ENCODE measurements at regions of chr1 and their contacts with region 1.

Region 1: GRCh38 chr1:27300341-27301051 is 21.5 kb upstream of the TMEM222 start:
- DNase-seq: peak; percentile 90 to 96 (median 93)
- H3K4me3 ChIP-seq: no peak overlapping the region
- H3K27ac ChIP-seq: no peak overlapping the region
- H3K4me1 ChIP-seq: peaks cover 0 to 5% (median 0%) of the 10 kb centered on the region in 3 donors
- H3K27me3 ChIP-seq: no peaks in the 10 kb centered on the region
- CTCF ChIP-seq: peak; percentile 99

Region 2: DNA sequence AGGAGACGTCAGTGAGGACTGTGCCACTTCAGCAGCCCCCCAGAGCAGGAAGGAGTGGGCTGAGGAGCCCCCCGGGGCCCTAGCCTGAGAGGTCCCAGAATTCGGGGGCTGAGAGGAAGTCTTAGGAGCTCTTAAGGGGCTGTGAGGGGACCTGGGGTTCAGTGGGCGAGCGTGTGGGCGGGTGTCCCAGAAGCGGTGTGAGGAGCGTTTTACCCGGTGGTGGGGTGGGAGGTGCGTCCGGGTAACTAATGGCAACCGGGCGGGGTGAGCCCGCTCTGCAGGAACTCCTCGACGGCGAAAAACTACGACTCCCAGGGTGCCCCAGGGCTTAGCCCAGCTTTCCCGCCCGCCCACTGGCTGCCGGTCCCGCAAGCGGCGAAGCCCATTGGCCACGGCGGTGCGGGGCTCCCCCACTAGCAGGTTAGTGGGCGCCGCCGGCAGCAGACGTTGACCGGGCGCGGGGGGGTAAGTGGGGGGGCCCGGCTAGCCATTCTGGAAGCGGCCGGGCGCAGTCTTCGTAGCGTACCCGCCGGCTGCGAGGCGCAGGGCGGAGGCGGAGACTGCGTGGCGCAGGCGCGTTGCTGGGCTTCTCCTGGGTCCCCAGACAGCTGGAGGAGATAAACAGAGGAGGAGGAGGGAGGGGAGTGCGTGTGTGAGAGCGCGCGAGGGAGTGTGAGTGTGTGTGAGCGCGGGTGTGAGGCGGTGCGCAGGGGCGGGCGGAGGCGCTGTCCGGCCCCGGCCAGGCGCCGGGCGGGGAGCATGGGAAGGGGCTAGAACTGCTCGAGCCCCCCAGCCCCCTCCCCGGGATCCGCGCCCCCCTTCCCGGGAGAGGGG is 66.2 kb before region 1 on chr1 and contains the start of gene WDTC1:
- intact Hi-C with region 1: no loop called
- DNase-seq: peak; percentile 98 to 99 (median 99)
- H3K4me3 ChIP-seq: peak within 1 kb of the TSS; percentile 84 to 88 (median 87)
- H3K27ac ChIP-seq: peak within 1 kb of the TSS; percentile 32 to 47
- H3K4me1 ChIP-seq: peaks cover 0 to 15% (median 0%) of the 10 kb centered on the region in 3 donors
- H3K27me3 ChIP-seq: no peaks in the 10 kb centered on the region
- CTCF ChIP-seq: no peak
- total RNA-seq, gene WDTC1: 42.2 TPM

Region 3: GRCh38 chr1:27392096-27392777 is 91.7 kb after region 1 on chr1 and contains the start of gene GPR3:
- intact Hi-C with region 1: loop called (anchors 5 kb)
- DNase-seq: peak; percentile 90 to 95 (median 94)
- H3K4me3 ChIP-seq: peak within 1 kb of the TSS; percentile 26 to 57 (median 53)
- H3K27ac ChIP-seq: peak within 1 kb of the TSS; percentile 81 to 83
- H3K4me1 ChIP-seq: peaks cover 0 to 16% (median 10%) of the 10 kb centered on the region in 3 donors
- H3K27me3 ChIP-seq: no peaks in the 10 kb centered on the region
- CTCF ChIP-seq: peak; percentile 46
- total RNA-seq, gene GPR3: 0.38 TPM

Region 4: GRCh38 chr1:27603681-27604578 is 303.4 kb after region 1 on chr1 and contains the start of gene AHDC1:
- intact Hi-C with region 1: loop called (anchors 10 kb)
- DNase-seq: peak; percentile 92 to 97 (median 96)
- H3K4me3 ChIP-seq: peak within 1 kb of the TSS; percentile 80 to 95 (median 91)
- H3K27ac ChIP-seq: peak within 1 kb of the TSS; percentile 95
- H3K4me1 ChIP-seq: peaks cover 6 to 18% (median 15%) of the 10 kb centered on the region in 3 donors
- H3K27me3 ChIP-seq: no peaks in the 10 kb centered on the region
- CTCF ChIP-seq: no peak
- total RNA-seq, gene AHDC1: 48.2 TPM

Region 5: GRCh38 chr1:27662707-27663393 is 362.4 kb after region 1 on chr1:
- intact Hi-C with region 1: loop called (anchors 10 kb)
- DNase-seq: peak; percentile 89 to 93 (median 91)
- H3K4me3 ChIP-seq: no peak overlapping the region
- H3K27ac ChIP-seq: peak overlapping the region in 1 of 2 donors; percentile 5
- H3K4me1 ChIP-seq: peaks cover 0 to 10% (median 0%) of the 10 kb centered on the region in 3 donors
- H3K27me3 ChIP-seq: no peaks in the 10 kb centered on the region
- CTCF ChIP-seq: peak; percentile 98